Activated T-helper 2 cell treated with anti-CD3 and anti-CD28 coated beads, Interferon-gamma antibody, Interleukin-2, Interleukin-4, amounts not matched to agents 10 μg/mL and 5 μg/mL and 100 μg/mL, durations not matched to agents 14 hours and 24 hours and 36 hours (primary cell): ENCODE measurements at regions of chr21 and their contacts with region 1.

Region 1: GRCh38 chr21:29232601-29233546 is 65.8 kb upstream of the BACH1 start:
- DNase-seq: no peak
- H3K4me3 Mint-ChIP-seq: no peak overlapping the region
- H3K27ac Mint-ChIP-seq: no peak overlapping the region
- H3K4me1 Mint-ChIP-seq: peaks cover 37% of the 10 kb centered on the region
- H3K27me3 Mint-ChIP-seq: peaks cover 56% of the 10 kb centered on the region

Region 2: DNA sequence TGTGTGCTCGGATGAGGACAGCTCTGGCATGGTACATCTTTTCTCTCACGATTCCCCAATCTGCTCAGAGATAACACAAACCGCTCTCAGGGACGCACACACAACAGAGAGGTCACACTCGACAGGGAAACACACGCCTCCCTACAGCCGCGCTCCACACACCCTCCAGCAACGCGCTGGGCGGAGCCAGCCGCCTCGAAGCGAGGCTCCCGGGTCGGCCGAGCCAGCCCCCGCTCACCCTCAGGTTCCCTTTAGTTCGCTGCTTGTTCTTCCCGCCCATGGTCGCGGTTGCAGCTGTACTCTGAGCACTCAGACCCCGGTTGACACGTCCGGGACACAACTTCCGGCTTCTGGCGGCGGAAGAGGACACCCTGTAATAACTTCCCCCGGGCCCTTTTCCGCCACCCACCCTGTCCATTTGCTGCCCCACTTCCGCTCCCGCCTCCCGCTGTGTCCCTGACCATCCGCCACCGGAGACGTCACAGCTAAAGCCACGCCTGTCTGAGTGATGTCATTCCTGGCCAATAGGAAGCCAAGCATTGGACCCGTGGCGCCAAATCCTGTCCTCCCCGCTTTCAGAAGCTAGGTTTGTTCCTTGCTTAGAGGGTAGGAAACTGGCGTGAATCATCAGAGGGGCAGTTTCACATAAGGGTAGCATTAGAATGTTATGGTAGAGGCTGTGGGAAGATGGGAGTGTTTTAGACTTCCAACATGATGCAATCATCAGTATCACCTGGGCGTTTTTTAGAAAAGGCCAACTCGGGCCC is 240.2 kb before region 1 on chr21 and contains the start of gene LTN1:
- intact Hi-C with region 1: no loop called
- DNase-seq: peak; percentile 99
- H3K4me3 Mint-ChIP-seq: peak within 1 kb of the TSS; percentile 95
- H3K27ac Mint-ChIP-seq: peak within 1 kb of the TSS; percentile 95
- H3K4me1 Mint-ChIP-seq: peaks cover 30% of the 10 kb centered on the region
- H3K27me3 Mint-ChIP-seq: no peaks in the 10 kb centered on the region
- total RNA-seq, gene LTN1: 24.9 and 27.5 TPM in 2 replicates

Region 3: GRCh38 chr21:29195981-29196669 is 36.7 kb before region 1 on chr21:
- intact Hi-C with region 1: loop called (anchors 2 kb)
- DNase-seq: peak; percentile 64
- H3K4me3 Mint-ChIP-seq: peak overlapping the region; percentile 80
- H3K27ac Mint-ChIP-seq: peak overlapping the region; percentile 80
- H3K4me1 Mint-ChIP-seq: peaks cover 32% of the 10 kb centered on the region
- H3K27me3 Mint-ChIP-seq: no peaks in the 10 kb centered on the region

Region 4: DNA sequence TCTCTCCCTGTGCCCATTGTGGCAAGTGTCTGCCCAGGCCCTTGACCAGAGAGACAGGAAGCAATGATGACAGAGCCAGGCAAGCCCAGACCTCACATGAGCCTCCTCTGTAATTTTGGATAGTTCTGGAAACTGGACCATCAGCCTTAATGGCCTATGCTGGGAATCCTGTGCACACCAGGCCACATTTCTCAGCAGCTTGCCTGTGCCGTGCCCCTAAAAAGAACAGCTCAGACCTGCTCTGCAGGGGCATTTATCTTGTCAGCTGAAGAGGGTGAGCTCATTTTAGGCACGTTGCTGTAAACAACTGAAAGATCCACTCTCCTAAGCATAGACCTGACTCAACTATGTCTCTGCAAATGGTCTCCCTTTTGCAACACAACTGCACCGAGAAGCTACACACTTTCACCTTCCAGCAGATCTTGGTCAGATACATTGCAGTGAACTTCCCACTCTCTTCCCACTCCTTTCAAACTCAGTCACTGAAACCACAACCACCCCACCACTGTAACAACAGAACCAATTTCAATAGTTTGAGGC is 12.3 kb after region 1 on chr21:
- intact Hi-C with region 1: loop called (anchors 1 kb)
- DNase-seq: no peak
- H3K4me3 Mint-ChIP-seq: no peak overlapping the region
- H3K27ac Mint-ChIP-seq: peak overlapping the region; percentile 17
- H3K4me1 Mint-ChIP-seq: peaks cover 9% of the 10 kb centered on the region
- H3K27me3 Mint-ChIP-seq: peaks cover 29% of the 10 kb centered on the region

Region 5: GRCh38 chr21:29306920-29307319 is 74.0 kb after region 1 on chr21:
- intact Hi-C with region 1: loop called (anchors 2 kb)
- DNase-seq: no peak
- H3K4me3 Mint-ChIP-seq: no peak overlapping the region
- H3K27ac Mint-ChIP-seq: peak overlapping the region; percentile 52
- H3K4me1 Mint-ChIP-seq: peaks cover 48% of the 10 kb centered on the region
- H3K27me3 Mint-ChIP-seq: no peaks in the 10 kb centered on the region

Region 6: DNA sequence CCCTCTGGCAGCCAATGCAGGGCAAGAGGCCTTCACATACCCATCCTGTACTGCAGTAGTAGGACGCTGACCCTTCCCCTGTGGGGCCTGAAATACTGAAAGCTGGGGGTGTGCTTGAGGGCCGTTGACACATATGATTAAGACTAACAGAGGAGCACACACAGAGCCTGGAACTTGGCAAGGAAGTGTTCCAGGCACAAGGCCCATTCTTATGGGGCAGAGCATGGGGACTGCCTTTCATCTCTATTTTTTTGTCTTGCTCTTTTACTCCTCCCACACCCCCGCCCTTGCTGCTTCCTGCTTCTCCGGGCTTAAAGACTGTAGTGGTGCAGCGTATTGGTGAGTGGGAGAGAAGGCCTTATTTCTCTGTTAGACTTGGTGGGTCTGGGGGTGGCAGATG is 203.3 kb after region 1 on chr21:
- intact Hi-C with region 1: no loop called
- DNase-seq: no peak
- H3K4me3 Mint-ChIP-seq: peak overlapping the region; percentile 13
- H3K27ac Mint-ChIP-seq: peak overlapping the region; percentile 46
- H3K4me1 Mint-ChIP-seq: peaks cover 19% of the 10 kb centered on the region
- H3K27me3 Mint-ChIP-seq: no peaks in the 10 kb centered on the region